ENCODE measurements at regions of chr12 and their contacts with region 1.

Region 1: DNA sequence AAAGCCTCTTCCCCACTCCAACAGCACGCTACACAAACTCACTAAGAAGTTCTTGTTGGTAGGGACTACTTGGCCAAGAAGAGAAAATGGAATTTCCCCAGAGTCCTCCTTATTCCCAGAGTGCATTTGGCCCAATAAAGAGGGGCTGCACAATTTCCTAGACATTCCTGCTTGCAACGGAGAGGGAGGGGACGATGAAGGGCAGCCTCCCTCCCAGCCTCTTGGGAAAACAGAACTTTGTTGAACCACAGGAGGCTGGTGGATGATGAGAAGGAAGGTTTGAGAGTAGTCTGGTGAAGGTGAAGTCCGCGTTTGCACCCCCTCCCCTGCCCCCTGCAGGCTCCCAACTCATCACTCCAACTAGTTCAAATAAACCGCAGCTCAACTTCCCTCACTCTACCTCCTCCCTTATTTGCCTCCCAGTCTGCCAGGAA is 19.1 kb upstream of the TBX3 start:
- DNase-seq: no peak
- H3K4me3 ChIP-seq: no peak overlapping the region
- H3K27ac ChIP-seq: no peak overlapping the region
- H3K4me1 ChIP-seq: no peaks in the 10 kb centered on the region
- H3K27me3 ChIP-seq: no peaks in the 10 kb centered on the region
- CTCF ChIP-seq: no peak

Region 2: GRCh38 chr12:114580306-114580705 is 122.8 kb before region 1 on chr12:
- CTCF ChIA-PET with region 1: no interaction called
- POLR2A ChIA-PET with region 1: interaction called, 26 read pairs
- intact Hi-C with region 1: no loop called
- DNase-seq: no peak
- H3K4me3 ChIP-seq: no peak overlapping the region
- H3K27ac ChIP-seq: no peak overlapping the region
- H3K4me1 ChIP-seq: no peaks in the 10 kb centered on the region
- H3K27me3 ChIP-seq: no peaks in the 10 kb centered on the region
- CTCF ChIP-seq: no peak

Region 3: DNA sequence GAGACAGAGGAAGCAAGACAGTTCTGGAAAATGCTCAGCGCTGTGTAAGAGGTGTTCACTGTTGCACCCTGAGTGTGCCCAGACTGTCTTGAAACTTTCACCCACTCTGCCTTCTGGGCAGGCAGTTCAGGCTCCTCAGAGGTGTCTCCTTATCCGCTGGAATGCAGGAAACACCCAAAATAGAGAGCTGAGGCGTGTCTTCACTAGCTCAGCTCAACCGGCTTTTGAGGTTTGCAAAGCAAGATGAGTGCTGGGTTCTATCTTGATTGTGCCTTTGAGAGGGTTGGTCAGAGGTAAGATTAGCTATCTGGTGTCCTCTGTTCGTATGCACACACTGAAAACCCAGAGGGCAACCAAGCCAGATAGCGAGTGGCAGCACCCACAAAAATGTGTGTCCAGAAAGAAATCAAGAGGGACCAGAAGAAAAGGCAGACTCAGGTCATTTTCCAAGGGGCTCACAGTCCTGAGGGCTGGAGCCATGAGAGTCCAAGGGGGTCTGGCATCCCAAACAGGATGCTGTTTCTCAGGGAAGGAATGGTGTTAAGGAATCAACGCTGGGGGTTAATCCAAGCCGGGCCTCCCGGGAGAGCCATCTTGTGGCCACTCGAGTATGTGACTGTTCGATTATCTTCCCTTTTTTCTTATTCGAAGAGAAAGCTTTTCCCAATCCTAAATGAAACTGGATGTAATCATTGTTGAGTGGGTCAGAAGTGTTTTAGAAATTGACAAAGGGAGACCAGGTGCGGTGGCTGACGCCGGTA is 66.2 kb before region 1 on chr12:
- CTCF ChIA-PET with region 1: no interaction called
- POLR2A ChIA-PET with region 1: no interaction called
- intact Hi-C with region 1: no loop called
- DNase-seq: peak; percentile 35
- H3K4me3 ChIP-seq: no peak overlapping the region
- H3K27ac ChIP-seq: no peak overlapping the region
- H3K4me1 ChIP-seq: no peaks in the 10 kb centered on the region
- H3K27me3 ChIP-seq: no peaks in the 10 kb centered on the region
- CTCF ChIP-seq: peak; percentile 45; the same call in 1 of the 2 replicates

Measured in A673 (cell line).